Mammary epithelial cell (primary cell): ENCODE measurements at regions of chr16 and their contacts with region 1.

Region 1: GRCh38 chr16:22161999-22162655 is at the start of gene SDR42E2:
- DNase-seq: peak; percentile 21
- H3K4me3 ChIP-seq: peak within 1 kb of the TSS in 2 of 3 experiments; percentile 11 to 20
- H3K27ac ChIP-seq: no peak within 1 kb of the TSS
- H3K4me1 ChIP-seq: no peaks in the 10 kb centered on the region
- H3K27me3 ChIP-seq: peaks cover 6% of the 10 kb centered on the region
- CTCF ChIP-seq: no peak
- total RNA-seq, gene SDR42E2: not detected

Region 2: DNA sequence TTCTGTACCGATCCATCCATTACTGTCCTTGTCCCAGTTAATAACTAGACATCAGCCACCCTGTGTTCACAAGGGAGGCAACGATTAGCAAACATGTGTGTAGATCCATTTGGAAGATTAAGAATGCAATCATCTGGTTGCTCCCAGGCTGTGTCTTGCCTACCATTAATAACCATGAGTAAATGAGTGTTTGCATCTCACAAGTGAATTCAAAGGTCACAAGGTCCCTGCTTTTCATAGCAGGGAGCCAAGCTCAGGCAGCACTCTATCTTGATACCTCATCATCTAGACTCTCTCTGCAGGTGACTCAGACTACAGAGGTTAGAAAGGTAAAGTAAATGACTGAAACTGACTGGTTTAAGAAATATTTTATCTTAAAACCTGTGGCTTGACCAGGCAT is 44.5 kb before region 1 on chr16:
- CTCF ChIA-PET with region 1: no interaction called
- dilution Hi-C with region 1: no loop called
- in situ Hi-C with region 1: no loop called
- intact Hi-C with region 1: loop called (anchors 5 kb)
- DNase-seq: peak; percentile 92
- H3K4me3 ChIP-seq: no peak overlapping the region
- H3K27ac ChIP-seq: no peak overlapping the region
- H3K4me1 ChIP-seq: peaks cover 3% of the 10 kb centered on the region
- H3K27me3 ChIP-seq: peaks cover 2% of the 10 kb centered on the region
- CTCF ChIP-seq: no peak

Region 3: DNA sequence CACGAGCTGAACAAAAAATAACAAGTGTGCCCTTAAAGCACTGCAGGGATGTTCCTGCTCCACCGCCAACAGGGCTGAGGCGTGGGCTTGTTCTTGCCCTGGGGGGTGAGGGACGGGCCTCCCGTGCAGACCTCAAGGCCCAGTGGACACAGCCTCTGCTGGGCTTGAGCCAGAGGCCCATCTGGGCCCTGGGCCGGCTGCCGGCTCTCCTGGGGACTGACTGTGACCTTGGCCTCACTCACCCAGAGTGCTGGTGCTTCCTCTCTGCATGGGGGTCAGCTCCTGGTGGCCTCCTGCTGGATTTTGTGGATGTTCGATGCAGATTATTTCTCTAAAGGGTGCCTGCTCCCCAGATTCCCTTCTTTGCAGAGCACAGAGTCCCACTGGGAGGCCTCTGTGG is 266.5 kb after region 1 on chr16:
- CTCF ChIA-PET with region 1: no interaction called
- dilution Hi-C with region 1: no loop called
- in situ Hi-C with region 1: no loop called
- intact Hi-C with region 1: no loop called
- DNase-seq: no peak
- H3K4me3 ChIP-seq: no peak overlapping the region
- H3K27ac ChIP-seq: no peak overlapping the region
- H3K4me1 ChIP-seq: peaks cover 5% of the 10 kb centered on the region
- H3K27me3 ChIP-seq: no peaks in the 10 kb centered on the region
- CTCF ChIP-seq: no peak